Activated CD4-positive, alpha-beta T cell treated with anti-CD3 and anti-CD28 coated beads, Interleukin-2, amount 10 ng/mL, durations not matched to agents 24 days and 14 days (primary cell): ENCODE measurements at regions of chr18 and their contacts with region 1.

Region 1: DNA sequence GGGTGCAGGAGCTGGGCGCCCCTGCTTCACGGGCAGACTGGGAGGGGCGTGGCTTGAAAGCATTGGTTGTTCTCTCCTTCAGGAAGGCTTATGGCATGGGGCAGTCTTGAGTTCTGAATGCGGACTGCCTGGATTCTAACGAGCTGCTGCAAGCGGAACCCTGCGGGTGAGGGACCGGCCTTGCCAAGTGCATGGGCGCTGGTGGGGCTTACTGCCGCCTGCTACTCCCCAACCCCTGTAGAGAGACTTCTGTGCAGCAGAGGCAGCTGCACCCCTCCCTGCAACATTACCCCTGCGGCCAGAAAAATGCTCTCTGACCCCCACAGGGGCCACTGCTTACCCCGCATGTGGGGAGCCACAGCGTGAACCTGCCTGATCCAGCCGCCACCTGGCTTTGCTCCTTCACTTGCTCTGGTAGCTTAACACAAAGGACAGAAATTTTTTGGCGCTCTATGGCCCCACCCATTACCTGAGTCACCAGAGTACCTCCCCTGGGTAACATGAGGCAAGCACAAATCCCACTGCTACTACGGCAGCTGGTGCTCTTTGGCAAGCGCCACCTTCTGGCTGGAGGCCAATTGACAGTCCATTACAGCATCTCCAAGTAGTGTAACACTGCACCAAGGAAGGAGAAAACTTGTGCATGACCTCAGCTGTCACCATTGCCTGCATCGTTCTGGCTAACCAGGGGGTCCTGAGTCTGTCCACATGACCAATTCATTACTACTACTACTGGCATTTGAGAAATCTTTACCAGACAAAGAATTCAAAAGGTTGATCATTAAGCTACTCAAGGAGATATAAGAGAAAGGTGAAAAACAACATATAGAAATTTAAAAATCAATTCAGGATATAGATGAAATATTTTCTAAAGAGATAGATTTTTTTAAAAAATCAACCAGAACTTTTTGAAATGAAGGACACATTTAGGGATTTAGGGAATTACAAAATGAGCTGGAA is 35.4 kb downstream of the MYL12B start:
- DNase-seq: peak; percentile 98
- H3K4me3 Mint-ChIP-seq: peak overlapping the region; percentile 93
- H3K27ac Mint-ChIP-seq: peak overlapping the region; percentile 82
- H3K4me1 Mint-ChIP-seq: peaks cover 11% of the 10 kb centered on the region
- H3K27me3 Mint-ChIP-seq: peaks cover 32% of the 10 kb centered on the region

Region 2: DNA sequence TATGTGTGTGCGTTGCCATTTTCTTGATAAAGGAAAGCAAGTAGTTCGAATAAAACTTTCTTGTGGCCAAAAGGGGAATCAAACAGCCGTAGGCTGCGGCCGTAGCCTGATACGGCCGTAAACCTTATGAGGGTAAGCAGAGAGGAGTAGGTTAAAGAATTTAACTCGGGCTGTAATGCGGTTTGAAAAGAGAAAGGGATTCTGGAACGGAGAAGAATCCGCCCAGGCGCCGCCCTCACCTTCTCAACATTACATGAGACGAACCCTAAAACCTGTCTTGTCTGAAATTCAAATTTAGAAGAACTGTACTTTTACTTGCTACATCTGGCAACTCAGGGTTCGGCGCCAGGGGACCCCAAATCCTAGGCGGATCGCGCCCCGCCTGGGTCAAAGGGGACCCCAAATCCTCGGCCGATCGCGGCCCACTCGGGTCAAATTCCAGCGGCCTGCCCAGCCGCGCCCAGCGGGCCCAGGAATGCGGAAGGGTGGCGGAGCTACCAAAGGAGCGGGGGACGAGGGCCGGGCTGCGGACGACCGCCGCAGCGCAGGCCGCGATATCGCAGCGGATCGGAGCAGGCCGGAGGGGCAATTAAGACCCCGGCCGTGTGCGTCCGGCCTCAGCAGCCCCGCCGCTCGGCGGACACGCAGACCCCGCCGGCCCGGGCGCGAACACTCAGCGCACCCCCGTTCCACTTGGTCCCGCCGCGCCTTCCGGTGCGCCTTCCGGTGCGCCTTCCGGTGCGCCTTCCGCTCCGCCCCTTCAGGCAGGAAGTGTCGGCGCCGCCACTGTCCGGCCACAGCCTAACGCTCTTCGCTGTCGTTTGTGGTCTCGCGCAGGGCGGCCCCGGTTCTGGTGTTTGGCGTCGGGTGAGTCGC is 35.7 kb before region 1 on chr18 and contains the start of gene MYL12B:
- intact Hi-C with region 1: loop called (anchors 1 kb)
- DNase-seq: peak; percentile 94
- H3K4me3 Mint-ChIP-seq: peak within 1 kb of the TSS; percentile 89
- H3K27ac Mint-ChIP-seq: peak within 1 kb of the TSS; percentile 98
- H3K4me1 Mint-ChIP-seq: peaks cover 68% of the 10 kb centered on the region
- H3K27me3 Mint-ChIP-seq: no peaks in the 10 kb centered on the region
- total RNA-seq, gene MYL12B: 239 and 245 TPM in 2 replicates

Region 3: GRCh38 chr18:3665780-3666525 is 368.6 kb after region 1 on chr18:
- intact Hi-C with region 1: loop called (anchors 5 kb)
- DNase-seq: peak; percentile 92
- H3K4me3 Mint-ChIP-seq: peak overlapping the region; percentile 61
- H3K27ac Mint-ChIP-seq: peak overlapping the region; percentile 53
- H3K4me1 Mint-ChIP-seq: peaks cover 33% of the 10 kb centered on the region
- H3K27me3 Mint-ChIP-seq: peaks cover 9% of the 10 kb centered on the region